Activated T-helper 1 cell treated with anti-CD3 and anti-CD28 coated beads, Interleukin-12 subunit alpha, Interleukin-12 subunit beta, Interleukin-2, Interleukin-4 antibody, amounts not matched to agents 30 ng/mL and 10 ng/mL and 1 ng/mL, durations not matched to agents 14 hours and 24 hours and 36 hours (primary cell): ENCODE measurements at regions of chr10 and their contacts with region 1.

Region 1: GRCh38 chr10:22003079-22003913 is at the start of gene DNAJC1:
- DNase-seq: peak; percentile 97
- H3K4me3 Mint-ChIP-seq: peak within 1 kb of the TSS; percentile 98
- H3K27ac Mint-ChIP-seq: peak within 1 kb of the TSS; percentile 96
- H3K4me1 Mint-ChIP-seq: peaks cover 41% of the 10 kb centered on the region
- H3K27me3 Mint-ChIP-seq: peaks cover 14% of the 10 kb centered on the region
- total RNA-seq, gene DNAJC1: 24.8 and 26.2 TPM in 2 replicates

Region 2: DNA sequence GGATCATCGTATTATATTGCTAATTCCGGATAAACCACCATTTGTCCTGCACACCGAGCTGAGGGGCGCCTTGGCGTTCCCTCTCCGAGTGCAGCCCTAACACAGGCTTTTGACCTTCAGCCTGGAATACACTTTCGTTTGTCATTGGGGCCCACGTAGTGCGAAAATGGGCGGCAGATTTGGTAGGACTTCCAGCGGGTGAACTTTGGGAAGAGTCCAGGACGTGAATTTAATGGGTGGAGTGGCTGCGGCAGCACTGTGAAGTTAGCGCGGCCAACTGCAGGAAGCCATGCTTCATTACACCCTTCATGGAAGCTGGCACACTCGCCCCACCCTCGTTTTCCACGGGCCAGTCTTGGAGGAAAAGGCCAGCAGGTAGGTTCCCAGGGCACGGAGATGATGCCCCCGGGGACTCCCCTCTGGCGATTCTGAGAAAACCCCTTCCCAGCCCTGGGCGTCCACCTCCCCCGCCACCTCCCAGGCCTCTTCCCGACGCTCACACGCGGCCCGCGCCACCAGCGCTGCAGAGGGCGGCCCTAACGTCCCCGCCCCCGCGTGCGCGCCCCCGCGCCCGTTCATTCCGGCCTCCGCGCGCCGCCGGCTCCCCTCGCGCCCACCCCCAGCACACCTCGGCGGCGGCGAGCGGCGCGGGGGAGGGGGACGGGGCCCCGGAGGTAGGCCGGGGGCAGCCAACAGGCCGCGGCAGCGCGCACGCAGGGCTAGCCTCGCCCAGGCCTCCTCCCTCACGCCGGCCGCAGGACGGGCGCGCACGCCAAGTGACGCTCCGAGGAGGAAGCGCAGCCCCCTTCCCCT is 469.6 kb before region 1 on chr10 and contains the start of gene MLLT10:
- intact Hi-C with region 1: loop called (anchors 2 kb)
- DNase-seq: peak; percentile 89
- H3K4me3 Mint-ChIP-seq: peak within 1 kb of the TSS; percentile 90
- H3K27ac Mint-ChIP-seq: peak within 1 kb of the TSS; percentile 90
- H3K4me1 Mint-ChIP-seq: peaks cover 17% of the 10 kb centered on the region
- H3K27me3 Mint-ChIP-seq: peaks cover 16% of the 10 kb centered on the region
- total RNA-seq, gene MLLT10: 40.9 and 43.1 TPM in 2 replicates

Region 3: DNA sequence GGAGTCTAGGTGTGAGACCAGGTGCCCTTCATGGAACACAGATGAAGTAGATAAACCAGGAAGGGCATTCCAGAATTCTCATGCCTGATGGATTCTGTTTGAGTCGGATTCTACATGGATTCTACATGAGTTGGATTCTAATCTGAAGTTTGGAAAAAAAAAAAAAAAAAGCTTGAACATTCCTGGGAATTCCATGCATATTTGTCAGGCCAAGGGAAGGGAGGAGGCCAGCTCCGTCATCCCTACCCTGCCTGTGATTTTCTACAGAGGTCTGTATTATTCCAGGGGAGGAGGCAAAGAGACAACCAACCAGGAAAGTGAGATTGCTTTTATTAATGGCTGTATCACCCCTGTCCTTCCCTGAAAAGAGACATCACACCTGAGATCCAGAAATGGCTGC is 242.3 kb after region 1 on chr10:
- intact Hi-C with region 1: loop called (anchors 1 kb)
- DNase-seq: no peak
- H3K4me3 Mint-ChIP-seq: no peak overlapping the region
- H3K27ac Mint-ChIP-seq: no peak overlapping the region
- H3K4me1 Mint-ChIP-seq: peaks cover 38% of the 10 kb centered on the region
- H3K27me3 Mint-ChIP-seq: no peaks in the 10 kb centered on the region

Region 4: DNA sequence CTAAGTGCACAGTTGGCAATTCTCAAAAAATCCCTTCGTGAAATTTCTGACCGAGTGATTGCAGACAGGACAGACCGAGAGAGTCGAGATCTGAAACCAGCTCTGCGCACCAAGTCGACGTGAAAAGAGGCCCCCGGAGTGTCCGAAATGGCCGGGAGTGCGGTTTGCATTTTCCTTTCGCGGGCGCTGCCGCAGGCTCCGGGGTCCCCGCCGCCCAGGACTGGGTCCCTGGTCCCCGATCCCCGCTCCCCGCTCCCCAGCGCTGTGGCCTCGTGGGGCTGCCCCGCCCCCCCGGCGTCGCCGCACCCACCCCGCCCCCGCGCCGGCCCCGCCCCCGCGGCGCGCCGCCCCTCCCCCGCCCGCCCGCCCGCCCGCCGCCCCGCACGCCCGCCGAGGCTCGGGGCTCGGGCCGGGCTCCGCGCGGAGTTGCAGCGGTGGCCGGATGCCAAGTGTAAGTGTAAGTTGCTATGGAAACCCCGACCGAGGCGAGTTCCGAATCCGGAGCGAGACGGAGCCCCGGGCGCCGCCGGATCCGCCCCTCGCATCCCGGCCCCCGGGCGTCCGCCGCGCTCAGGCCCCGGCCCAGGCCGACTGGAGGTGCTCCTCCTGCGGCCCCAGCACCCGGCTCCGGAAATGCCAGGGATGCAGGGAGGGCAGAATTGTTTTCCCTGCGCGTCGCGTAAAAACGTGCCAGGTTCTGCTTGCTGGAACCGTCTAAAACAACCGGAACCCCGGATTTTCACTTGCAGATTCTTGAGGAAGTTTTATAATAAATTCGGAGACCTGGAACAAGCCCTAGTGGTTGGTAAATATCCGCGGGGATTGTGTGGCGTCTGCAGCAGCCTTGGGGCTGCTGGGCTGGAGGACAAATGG is 322.2 kb after region 1 on chr10:
- intact Hi-C with region 1: loop called (anchors 2 kb)
- DNase-seq: peak; percentile 66
- H3K4me3 Mint-ChIP-seq: peak overlapping the region; percentile 90
- H3K27ac Mint-ChIP-seq: peak overlapping the region; percentile 76
- H3K4me1 Mint-ChIP-seq: peaks cover 43% of the 10 kb centered on the region
- H3K27me3 Mint-ChIP-seq: peaks cover 32% of the 10 kb centered on the region

Region 5: DNA sequence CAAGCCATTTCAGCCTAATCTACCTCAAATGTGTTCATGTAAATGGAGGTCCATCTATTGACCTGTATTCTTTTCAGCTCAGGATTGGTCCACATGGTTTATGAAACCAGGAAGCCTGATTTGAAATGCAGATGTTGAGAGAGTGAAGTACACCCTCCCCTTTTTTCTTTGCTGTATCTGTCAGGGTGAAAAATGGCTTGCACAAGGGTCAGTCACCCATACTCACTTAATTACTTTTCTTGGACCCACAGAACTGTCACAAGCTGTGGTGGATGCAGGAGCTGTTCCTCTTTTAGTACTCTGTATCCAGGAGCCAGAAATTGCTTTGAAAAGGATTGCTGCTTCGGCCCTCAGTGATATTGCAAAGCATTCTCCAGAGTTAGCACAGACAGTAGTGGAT is 383.2 kb after region 1 on chr10:
- intact Hi-C with region 1: no loop called
- DNase-seq: no peak
- H3K4me3 Mint-ChIP-seq: no peak overlapping the region
- H3K27ac Mint-ChIP-seq: no peak overlapping the region
- H3K4me1 Mint-ChIP-seq: peaks cover 6% of the 10 kb centered on the region
- H3K27me3 Mint-ChIP-seq: no peaks in the 10 kb centered on the region

Region 6: DNA sequence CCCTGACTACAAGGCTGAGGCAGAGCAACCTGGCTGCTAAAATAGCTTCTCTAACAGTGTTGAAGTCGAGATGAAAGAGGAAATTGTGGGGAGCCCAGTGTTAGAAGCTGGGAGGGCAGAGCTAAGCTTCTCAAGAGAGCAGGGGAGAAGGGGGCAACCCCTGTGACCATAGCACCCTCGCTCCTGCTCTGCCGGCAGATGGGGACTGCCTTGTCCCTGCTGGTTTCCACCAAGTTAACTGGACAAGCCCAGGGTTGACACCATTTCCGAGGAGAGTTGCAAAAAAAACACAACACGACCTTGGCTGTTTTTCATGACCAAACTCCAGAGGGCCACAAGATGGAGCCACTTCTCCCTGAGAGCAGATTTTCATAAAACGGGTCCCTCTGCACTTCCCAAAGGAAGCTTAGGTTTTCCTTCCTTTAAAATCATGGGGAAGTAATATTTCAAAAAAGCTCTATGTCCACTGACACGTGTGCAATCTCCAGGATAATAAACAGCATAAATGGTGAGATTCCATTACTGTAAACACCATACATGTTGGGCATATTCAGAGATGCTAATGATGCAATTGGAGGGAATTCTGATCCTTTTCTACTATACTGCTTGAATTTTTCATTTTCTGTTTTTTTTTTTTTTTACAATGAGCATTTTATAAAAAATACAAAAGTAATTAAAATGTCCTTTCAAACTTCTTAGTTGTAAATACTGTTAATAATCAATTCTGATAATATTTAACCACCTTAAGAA is 570.7 kb after region 1 on chr10:
- intact Hi-C with region 1: loop called (anchors 2 kb)
- DNase-seq: no peak
- H3K4me3 Mint-ChIP-seq: no peak overlapping the region
- H3K27ac Mint-ChIP-seq: peak overlapping the region; percentile 44
- H3K4me1 Mint-ChIP-seq: peaks cover 46% of the 10 kb centered on the region
- H3K27me3 Mint-ChIP-seq: no peaks in the 10 kb centered on the region

Region 7: GRCh38 chr10:22714479-22715289 is 711.4 kb after region 1 on chr10 and contains the start of gene PIP4K2A:
- intact Hi-C with region 1: loop called (anchors 2 kb)
- DNase-seq: peak; percentile 72
- H3K4me3 Mint-ChIP-seq: peak within 1 kb of the TSS; percentile 88
- H3K27ac Mint-ChIP-seq: peak within 1 kb of the TSS; percentile 85
- H3K4me1 Mint-ChIP-seq: peaks cover 39% of the 10 kb centered on the region
- H3K27me3 Mint-ChIP-seq: no peaks in the 10 kb centered on the region
- total RNA-seq, gene PIP4K2A: 92.7 and 104 TPM in 2 replicates